CD4-positive, alpha-beta memory T cell (primary cell): ENCODE measurements at regions of chr9 and their contacts with region 1.

Region 1: GRCh38 chr9:129177791-129178559 is at the start of gene IER5L:
- DNase-seq: peak; percentile 91 to 93 (median 92)
- H3K4me3 ChIP-seq: peak within 1 kb of the TSS; percentile 47 to 59
- H3K4me3 Mint-ChIP-seq: peak within 1 kb of the TSS; percentile 89 to 93 (median 90)
- H3K27ac ChIP-seq: peak within 1 kb of the TSS; percentile 14
- H3K27ac Mint-ChIP-seq: peak within 1 kb of the TSS in 4 of 7 donors; percentile 81 to 93 (median 88)
- H3K4me1 ChIP-seq: peaks cover 28% of the 10 kb centered on the region
- H3K4me1 Mint-ChIP-seq: peaks cover 6 to 16% (median 9%) of the 10 kb centered on the region in 4 donors
- H3K27me3 ChIP-seq: peaks cover under 1% of the 10 kb centered on the region
- H3K27me3 Mint-ChIP-seq: peaks cover 0 to 2% of the 10 kb centered on the region in 2 donors
- total RNA-seq, gene IER5L: 3.1 to 3.6 TPM

Region 2: GRCh38 chr9:129110740-129111527 is 67.0 kb before region 1 on chr9 and contains the starts of genes CRAT and PTPA:
- CTCF ChIA-PET with region 1: no interaction called
- POLR2A ChIA-PET with region 1: interaction called, 12 read pairs
- intact Hi-C with region 1: no loop called
- DNase-seq: peak; percentile 90 to 96 (median 91)
- H3K4me3 ChIP-seq: peak within 1 kb of the TSS; percentile 90 to 93
- H3K4me3 Mint-ChIP-seq: peak within 1 kb of the TSS; percentile 92 to 99 (median 94)
- H3K27ac ChIP-seq: peak within 1 kb of the TSS; percentile 84
- H3K27ac Mint-ChIP-seq: peak within 1 kb of the TSS; percentile 83 to 97 (median 96)
- H3K4me1 ChIP-seq: peaks cover 40% of the 10 kb centered on the region
- H3K4me1 Mint-ChIP-seq: peaks cover 17 to 46% (median 29%) of the 10 kb centered on the region in 4 donors
- H3K27me3 ChIP-seq: no peaks in the 10 kb centered on the region
- H3K27me3 Mint-ChIP-seq: no peaks in the 10 kb centered on the region
- total RNA-seq, gene CRAT: 11.2 to 12.4 TPM
- total RNA-seq, gene PTPA: 49.0 to 51.3 TPM

Region 3: GRCh38 chr9:129202613-129203555 is 24.9 kb after region 1 on chr9:
- CTCF ChIA-PET with region 1: interaction called, 5 read pairs
- POLR2A ChIA-PET with region 1: interaction called, 3 read pairs
- intact Hi-C with region 1: loop called (anchors 1 kb)
- DNase-seq: peak; percentile 87 to 93 (median 89)
- H3K4me3 ChIP-seq: peak overlapping the region in 1 of 2 donors; percentile 51
- H3K4me3 Mint-ChIP-seq: peak overlapping the region; percentile 63 to 76 (median 72)
- H3K27ac ChIP-seq: peak overlapping the region; percentile 61
- H3K27ac Mint-ChIP-seq: peak overlapping the region; percentile 50 to 92 (median 80)
- H3K4me1 ChIP-seq: peaks cover 22% of the 10 kb centered on the region
- H3K4me1 Mint-ChIP-seq: peaks cover 9 to 20% (median 14%) of the 10 kb centered on the region in 4 donors
- H3K27me3 ChIP-seq: no peaks in the 10 kb centered on the region
- H3K27me3 Mint-ChIP-seq: peaks cover 0 to 2% of the 10 kb centered on the region in 2 donors

Region 4: DNA sequence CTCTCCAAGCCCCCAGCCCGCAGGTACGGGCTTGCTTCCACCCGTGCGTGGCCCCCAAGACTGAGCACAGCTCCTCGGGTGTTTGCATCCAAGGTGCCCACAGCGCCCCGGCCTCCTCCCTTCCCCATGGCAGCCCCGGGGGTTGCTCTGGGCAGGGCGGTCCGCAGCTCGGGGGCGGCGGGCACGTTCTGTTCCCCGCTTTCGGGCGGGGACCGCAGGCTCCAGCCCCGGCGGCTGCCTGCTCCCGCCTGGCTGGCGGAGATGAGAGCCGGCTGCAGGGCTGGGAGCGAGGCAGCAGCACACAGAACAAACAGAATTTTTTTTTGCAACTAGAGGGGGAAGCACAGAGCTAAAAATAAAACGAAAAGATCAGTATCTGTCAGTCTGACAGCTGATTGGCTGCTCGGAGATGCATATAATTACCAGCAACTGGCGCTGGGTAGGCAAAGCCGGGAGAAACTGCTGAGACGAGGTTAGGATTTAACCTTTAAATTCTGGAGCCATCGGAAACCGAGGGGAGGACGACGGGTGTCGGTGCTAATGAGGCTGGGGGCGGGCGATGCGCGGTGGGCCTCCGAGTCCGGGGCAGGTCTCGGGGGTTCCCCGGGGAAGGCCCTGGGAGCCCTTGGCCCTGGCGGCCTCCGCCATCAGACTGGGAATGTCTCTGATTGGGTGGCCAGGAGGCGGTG is 142.7 kb after region 1 on chr9:
- CTCF ChIA-PET with region 1: interaction called, 12 read pairs
- POLR2A ChIA-PET with region 1: interaction called, 10 read pairs
- intact Hi-C with region 1: no loop called
- DNase-seq: peak; percentile 63 to 74 (median 68)
- H3K4me3 ChIP-seq: peak overlapping the region in 1 of 2 donors; percentile 51
- H3K4me3 Mint-ChIP-seq: peak overlapping the region; percentile 62 to 90 (median 82)
- H3K27ac ChIP-seq: no peak overlapping the region
- H3K27ac Mint-ChIP-seq: peak overlapping the region in 6 of 7 donors; percentile 50 to 97 (median 78)
- H3K4me1 ChIP-seq: peaks cover 20% of the 10 kb centered on the region
- H3K4me1 Mint-ChIP-seq: peaks cover 5 to 20% (median 9%) of the 10 kb centered on the region in 4 donors
- H3K27me3 ChIP-seq: no peaks in the 10 kb centered on the region
- H3K27me3 Mint-ChIP-seq: peaks cover 0 to 1% of the 10 kb centered on the region in 2 donors

Region 5: DNA sequence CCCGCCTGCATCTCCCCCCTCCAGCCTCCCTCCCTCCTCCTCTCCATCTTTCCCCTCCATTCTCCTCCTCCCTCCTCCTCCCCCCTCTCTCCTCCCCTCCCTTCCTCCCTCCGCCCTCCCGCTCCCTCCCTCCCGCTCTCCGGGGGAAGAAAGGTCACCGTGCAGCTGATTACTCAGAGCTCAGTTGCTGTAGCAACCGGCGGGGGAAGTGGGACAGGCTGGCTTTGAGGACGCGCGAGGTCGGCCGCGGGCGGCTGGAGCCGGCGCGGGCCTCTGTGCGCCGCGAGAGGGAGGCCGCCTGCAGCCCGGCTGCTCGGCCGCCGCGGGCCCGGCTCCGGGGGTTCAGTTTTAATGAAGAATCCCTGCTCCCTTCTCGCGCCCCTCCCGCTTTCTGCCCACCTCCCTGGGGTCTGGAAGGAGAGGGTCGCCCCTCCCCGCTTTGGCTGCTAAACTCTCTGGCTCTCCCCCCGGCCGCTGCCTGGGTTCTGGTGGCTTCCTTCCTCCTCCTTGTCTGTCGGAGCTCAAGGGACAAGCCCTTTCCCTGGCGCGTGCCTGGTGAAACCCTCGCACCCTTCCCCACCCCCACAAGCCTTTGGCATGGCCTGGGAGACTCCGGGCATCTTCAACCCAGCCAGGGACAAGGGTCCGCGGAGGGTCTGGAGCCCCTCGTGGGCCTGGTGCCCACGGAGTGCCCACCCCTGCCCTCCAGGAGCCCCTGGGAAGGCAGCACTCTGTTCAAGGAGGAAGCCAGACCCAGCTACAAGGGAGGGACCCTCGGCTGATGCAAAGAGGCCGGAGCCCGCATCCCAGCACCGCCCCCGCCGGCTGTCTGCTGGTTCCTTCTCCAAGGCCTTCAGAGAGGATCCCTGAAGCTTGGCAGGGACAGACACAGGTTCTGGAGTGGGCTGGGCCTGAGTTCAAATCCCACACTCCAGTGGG is 282.6 kb after region 1 on chr9:
- CTCF ChIA-PET with region 1: interaction called, 8 read pairs
- POLR2A ChIA-PET with region 1: interaction called, 31 read pairs
- intact Hi-C with region 1: no loop called
- DNase-seq: peak; percentile 80 to 94 (median 84)
- H3K4me3 ChIP-seq: peak overlapping the region in 1 of 2 donors; percentile 47
- H3K4me3 Mint-ChIP-seq: peak overlapping the region; percentile 68 to 81 (median 76)
- H3K27ac ChIP-seq: peak overlapping the region; percentile 84
- H3K27ac Mint-ChIP-seq: peak overlapping the region; percentile 87 to 96 (median 93)
- H3K4me1 ChIP-seq: peaks cover 54% of the 10 kb centered on the region
- H3K4me1 Mint-ChIP-seq: peaks cover 29 to 53% (median 42%) of the 10 kb centered on the region in 4 donors
- H3K27me3 ChIP-seq: no peaks in the 10 kb centered on the region
- H3K27me3 Mint-ChIP-seq: no peaks in the 10 kb centered on the region

Region 6: DNA sequence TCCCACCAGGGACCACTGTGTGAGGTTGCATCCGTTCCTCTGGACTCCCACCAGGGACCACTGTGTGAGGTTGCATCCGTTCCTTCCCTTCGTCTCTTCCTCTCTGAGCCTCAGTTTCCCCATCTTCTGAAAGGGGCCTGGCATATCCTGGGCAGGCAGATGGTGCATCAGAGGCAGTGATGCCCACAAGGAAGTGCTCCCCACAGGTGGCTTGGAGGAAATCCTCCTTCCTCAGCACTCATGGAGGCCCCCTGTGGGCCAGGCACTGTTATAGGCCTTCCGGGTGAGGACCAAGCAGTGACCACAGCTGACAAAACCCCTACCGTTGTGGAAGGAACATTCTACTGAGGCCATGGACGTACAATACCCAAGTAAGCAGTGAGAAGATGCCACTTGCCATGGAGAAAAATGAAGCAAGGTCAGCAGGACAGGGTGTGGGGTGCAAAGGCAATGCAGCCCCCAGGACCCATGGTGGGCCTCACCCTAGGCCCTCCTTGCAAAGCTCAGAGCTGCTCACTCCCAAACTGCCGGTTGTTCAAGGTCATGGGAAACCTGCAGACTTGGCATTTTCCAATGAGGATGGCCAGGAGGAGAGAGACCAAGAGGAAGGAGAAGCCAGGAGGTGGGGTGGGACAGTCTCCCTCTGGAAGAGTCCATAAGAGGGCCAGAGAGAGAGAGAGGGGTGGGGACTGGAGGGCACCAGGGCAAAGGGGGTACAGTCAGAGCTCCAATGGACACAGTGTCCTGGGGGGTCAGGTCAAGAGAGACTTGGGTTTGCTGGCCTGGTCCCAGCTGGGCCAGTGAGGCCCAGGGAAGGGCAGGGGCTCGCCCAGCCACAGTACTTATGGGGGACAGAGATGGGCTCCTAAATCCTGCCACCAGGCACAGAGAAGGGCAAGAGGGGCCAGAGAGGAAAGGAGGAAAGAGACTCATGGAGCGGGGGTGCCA is 391.8 kb after region 1 on chr9:
- CTCF ChIA-PET with region 1: interaction called, 4 read pairs
- POLR2A ChIA-PET with region 1: interaction called, 3 read pairs
- intact Hi-C with region 1: loop called (anchors 2 kb)
- DNase-seq: no peak
- H3K4me3 ChIP-seq: no peak overlapping the region
- H3K4me3 Mint-ChIP-seq: peak overlapping the region; percentile 3 to 82 (median 76)
- H3K27ac ChIP-seq: no peak overlapping the region
- H3K27ac Mint-ChIP-seq: peak overlapping the region in 2 of 7 donors; percentile 15 to 77
- H3K4me1 ChIP-seq: peaks cover 20% of the 10 kb centered on the region
- H3K4me1 Mint-ChIP-seq: peaks cover 0 to 13% (median 9%) of the 10 kb centered on the region in 4 donors
- H3K27me3 ChIP-seq: peaks cover 15% of the 10 kb centered on the region
- H3K27me3 Mint-ChIP-seq: peaks cover 13 to 14% of the 10 kb centered on the region in 2 donors

Region 7: DNA sequence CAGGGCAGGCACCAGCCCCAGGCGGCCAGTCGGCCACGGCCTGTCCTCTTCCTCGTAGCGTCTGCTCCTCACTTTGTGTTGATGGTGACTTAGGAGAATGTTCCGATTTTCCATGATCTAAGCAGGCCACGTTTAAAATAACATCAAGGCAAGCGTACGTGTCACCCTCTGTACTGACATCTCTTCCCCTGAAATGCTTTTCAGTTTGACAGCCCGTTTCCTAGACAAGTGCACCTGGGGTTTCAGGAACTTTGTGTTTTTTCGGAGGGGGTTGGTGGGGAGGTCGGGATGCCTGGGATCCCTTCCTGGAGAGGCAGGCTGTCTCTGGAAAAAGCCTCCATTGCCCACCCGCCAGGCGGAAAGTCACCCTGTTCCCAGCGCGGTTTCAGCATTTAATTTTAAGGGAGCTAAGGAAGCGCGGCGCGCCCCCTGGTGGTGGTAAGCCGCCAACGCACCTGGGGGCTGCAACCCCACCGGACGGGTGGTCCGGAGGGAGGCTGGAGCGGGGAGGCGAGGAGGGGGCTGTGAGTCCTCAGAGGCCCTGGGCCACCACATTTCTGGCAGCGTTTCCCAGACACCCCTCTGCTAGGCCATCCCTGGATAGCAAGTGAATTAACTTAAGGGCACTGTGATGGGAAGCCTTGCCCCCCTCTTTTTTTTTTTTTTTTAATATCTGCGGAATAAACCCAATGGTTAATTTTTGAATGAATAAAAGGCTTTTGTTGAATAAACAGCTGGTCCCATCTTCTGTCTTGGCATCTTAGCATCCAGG is 1058.1 kb after region 1 on chr9:
- CTCF ChIA-PET with region 1: no interaction called
- POLR2A ChIA-PET with region 1: no interaction called
- intact Hi-C with region 1: no loop called
- DNase-seq: peak in 4 of 5 donors; percentile 55 to 70 (median 60)
- H3K4me3 ChIP-seq: no peak overlapping the region
- H3K4me3 Mint-ChIP-seq: peak overlapping the region in 3 of 8 donors; percentile 29 to 55 (median 46)
- H3K27ac ChIP-seq: no peak overlapping the region
- H3K27ac Mint-ChIP-seq: peak overlapping the region in 3 of 7 donors; percentile 27 to 84 (median 57)
- H3K4me1 ChIP-seq: peaks cover 28% of the 10 kb centered on the region
- H3K4me1 Mint-ChIP-seq: peaks cover 9 to 43% (median 17%) of the 10 kb centered on the region in 4 donors
- H3K27me3 ChIP-seq: no peaks in the 10 kb centered on the region
- H3K27me3 Mint-ChIP-seq: no peaks in the 10 kb centered on the region